H1 (cell line): ENCODE measurements at regions of chr9 and their contacts with region 1.

Region 1: GRCh38 chr9:133356391-133357091 is at the starts of genes SURF1 and SURF2:
- DNase-seq: peak in 1 of 2 experiments; percentile 89
- H3K4me3 ChIP-seq: peak within 1 kb of the TSS; percentile 72 to 97 (median 96)
- H3K27ac ChIP-seq: no peak within 1 kb of the TSS
- H3K4me1 ChIP-seq: peaks cover 0 to 8% (median 3%) of the 10 kb centered on the region in 4 experiments; a peak in 5 of 7 replicates
- H3K27me3 ChIP-seq: no peaks in the 10 kb centered on the region
- CTCF ChIP-seq: peak in 1 of 3 experiments; percentile 12; a peak in 1 of 4 replicates
- EP300 ChIP-seq: no peak
- POLR2A ChIP-seq: peak in 1 of 2 experiments; percentile 77; a peak in 2 of 3 replicates
- RAD21 ChIP-seq: no peak
- total RNA-seq, gene SURF1: 39.6 and 43.1 TPM in 2 replicates
- total RNA-seq, gene SURF2: 36.6 and 42.1 TPM in 2 replicates

Region 2: GRCh38 chr9:133307301-133307700 is 49.2 kb before region 1 on chr9:
- CTCF ChIA-PET with region 1: no interaction called
- POLR2A ChIA-PET with region 1: no interaction called
- DNase-seq: no peak
- H3K4me3 ChIP-seq: no peak overlapping the region
- H3K27ac ChIP-seq: no peak overlapping the region
- H3K4me1 ChIP-seq: no peaks in the 10 kb centered on the region
- H3K27me3 ChIP-seq: no peaks in the 10 kb centered on the region; a peak in 1 of 7 replicates
- CTCF ChIP-seq: no peak
- EP300 ChIP-seq: no peak
- POLR2A ChIP-seq: no peak
- RAD21 ChIP-seq: no peak

Region 3: DNA sequence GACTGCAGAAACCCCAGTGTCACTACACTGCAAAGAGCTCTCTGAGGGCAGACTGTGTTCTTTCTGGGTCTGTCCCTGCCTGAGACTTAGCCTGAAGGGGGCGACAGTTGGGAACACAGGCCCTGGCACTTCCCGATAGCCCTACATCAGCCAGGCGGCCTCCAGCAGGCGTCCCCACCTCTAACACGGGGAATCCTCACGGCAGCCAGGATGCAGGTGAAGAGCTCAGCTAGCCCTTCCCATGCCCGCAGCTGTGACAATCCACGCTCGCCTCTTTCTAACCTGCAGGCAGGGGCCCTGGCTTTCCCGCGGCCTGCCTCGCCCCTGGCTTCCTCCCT is 14.5 kb before region 1 on chr9:
- CTCF ChIA-PET with region 1: interaction called, 22 read pairs
- POLR2A ChIA-PET with region 1: interaction called, 461 read pairs
- DNase-seq: peak in 1 of 2 experiments; percentile 76
- H3K4me3 ChIP-seq: no peak overlapping the region
- H3K27ac ChIP-seq: no peak overlapping the region
- H3K4me1 ChIP-seq: peaks cover 0 to 7% (median 5%) of the 10 kb centered on the region in 4 experiments; a peak in 5 of 7 replicates
- H3K27me3 ChIP-seq: no peaks in the 10 kb centered on the region
- CTCF ChIP-seq: peak in 2 of 3 experiments; percentile 81 to 86; a peak in 3 of 4 replicates
- EP300 ChIP-seq: no peak
- POLR2A ChIP-seq: no peak
- RAD21 ChIP-seq: peak; percentile 19 to 33; a peak in 3 of 4 replicates

Region 4: GRCh38 chr9:133396952-133397351 is 40.4 kb after region 1 on chr9:
- CTCF ChIA-PET with region 1: interaction called, 21 read pairs
- POLR2A ChIA-PET with region 1: interaction called, 13 read pairs
- DNase-seq: peak in 1 of 2 experiments; percentile 81
- H3K4me3 ChIP-seq: no peak overlapping the region
- H3K27ac ChIP-seq: no peak overlapping the region
- H3K4me1 ChIP-seq: no peaks in the 10 kb centered on the region
- H3K27me3 ChIP-seq: no peaks in the 10 kb centered on the region; a peak in 3 of 7 replicates
- CTCF ChIP-seq: peak in 2 of 3 experiments; percentile 76 to 87; a peak in 3 of 4 replicates
- EP300 ChIP-seq: no peak
- POLR2A ChIP-seq: no peak
- RAD21 ChIP-seq: peak; percentile 53 to 58

Region 5: DNA sequence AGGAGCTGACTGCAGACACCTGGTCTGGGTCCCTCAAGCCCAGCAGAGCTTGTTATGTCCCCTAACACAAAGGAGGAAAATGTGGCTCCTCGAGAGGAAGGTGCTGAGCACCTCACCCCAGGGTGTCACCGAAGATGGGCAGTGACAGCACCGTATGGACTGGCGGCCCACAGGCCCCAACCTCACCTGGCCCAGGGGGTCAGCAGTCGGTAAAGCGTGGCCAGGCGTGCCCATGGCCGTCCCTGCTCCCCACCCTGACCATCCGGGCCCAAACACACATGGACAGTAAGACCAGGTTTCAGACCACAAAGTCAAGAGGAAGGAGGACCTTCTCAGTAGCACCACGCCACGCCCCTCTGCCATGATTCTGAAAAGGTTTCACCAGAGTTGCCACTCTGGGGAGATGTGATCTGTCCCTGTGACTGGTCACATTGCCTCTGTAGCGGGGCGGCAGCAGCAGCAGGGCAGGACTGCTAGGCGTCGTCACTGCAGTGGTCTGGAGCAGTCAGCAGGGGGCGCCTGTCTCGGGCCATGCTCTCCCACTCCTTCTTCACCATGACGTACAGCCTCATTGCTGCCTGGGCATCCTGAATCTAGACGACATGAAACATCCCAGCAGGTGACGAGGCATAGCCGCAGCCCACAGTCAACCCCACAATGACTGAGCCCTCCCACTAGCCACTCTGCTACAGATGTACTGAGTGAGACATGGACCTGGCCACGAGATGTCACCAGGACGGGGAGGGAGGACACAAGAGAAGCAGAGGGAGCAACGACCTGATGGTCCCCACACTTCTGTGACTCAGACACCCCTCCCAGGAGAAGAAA is 50.2 kb after region 1 on chr9:
- CTCF ChIA-PET with region 1: interaction called, 22 read pairs
- POLR2A ChIA-PET with region 1: interaction called, 7 read pairs
- DNase-seq: peak; percentile 49 to 89
- H3K4me3 ChIP-seq: no peak overlapping the region
- H3K27ac ChIP-seq: no peak overlapping the region
- H3K4me1 ChIP-seq: no peaks in the 10 kb centered on the region
- H3K27me3 ChIP-seq: no peaks in the 10 kb centered on the region
- CTCF ChIP-seq: peak in 2 of 3 experiments; percentile 86 to 98; a peak in 3 of 4 replicates
- EP300 ChIP-seq: no peak
- POLR2A ChIP-seq: no peak
- RAD21 ChIP-seq: peak; percentile 55 to 60

Region 6: DNA sequence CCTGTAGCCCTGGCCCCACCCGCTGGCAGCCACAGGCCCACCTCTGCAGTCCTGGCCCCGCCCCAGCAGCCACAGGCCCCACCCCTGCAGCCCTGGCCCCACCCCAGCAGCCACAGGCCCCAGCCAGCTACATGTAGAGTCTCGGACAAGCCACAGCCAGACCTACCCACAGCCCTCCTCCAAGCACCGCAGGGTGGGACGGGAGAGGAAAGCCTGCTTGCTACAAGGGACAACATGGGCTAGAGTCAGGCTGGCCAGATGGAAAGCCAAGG is 431.1 kb after region 1 on chr9:
- CTCF ChIA-PET with region 1: no interaction called
- POLR2A ChIA-PET with region 1: no interaction called
- DNase-seq: peak in 1 of 2 experiments; percentile 73
- H3K4me3 ChIP-seq: no peak overlapping the region
- H3K27ac ChIP-seq: no peak overlapping the region
- H3K4me1 ChIP-seq: peaks cover 0 to 3% (median 1%) of the 10 kb centered on the region in 4 experiments; a peak in 4 of 7 replicates
- H3K27me3 ChIP-seq: no peaks in the 10 kb centered on the region
- CTCF ChIP-seq: no peak
- EP300 ChIP-seq: no peak
- POLR2A ChIP-seq: no peak
- RAD21 ChIP-seq: no peak